H1 (cell line): ENCODE measurements at regions of chr5 and their contacts with region 1.

Region 1: DNA sequence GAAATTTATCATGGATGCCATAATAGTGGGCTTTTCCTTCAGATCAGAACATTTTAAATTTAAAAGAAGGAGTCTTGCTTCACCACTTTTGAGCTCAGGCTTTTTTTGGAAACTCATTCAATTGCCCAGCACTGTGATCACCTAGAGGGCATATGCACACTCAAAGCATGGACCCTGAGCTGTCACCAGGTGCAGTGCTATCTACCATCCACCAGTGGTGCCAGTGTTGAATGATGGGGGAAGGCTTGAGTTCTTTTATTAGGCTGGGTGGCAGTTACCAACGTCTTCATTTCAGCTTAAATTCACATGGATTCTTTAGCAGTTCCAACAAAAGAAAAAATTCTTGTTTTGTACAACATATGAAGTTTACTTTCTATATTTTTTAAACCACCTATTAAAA is 164.1 kb downstream of the CFAP90 start:
- DNase-seq: no peak
- H3K4me3 ChIP-seq: no peak overlapping the region
- H3K27ac ChIP-seq: no peak overlapping the region
- H3K4me1 ChIP-seq: no peaks in the 10 kb centered on the region; a peak in 1 of 7 replicates
- H3K27me3 ChIP-seq: no peaks in the 10 kb centered on the region
- CTCF ChIP-seq: peak; percentile 17 to 47 (median 37); a peak in 3 of 4 replicates
- EP300 ChIP-seq: no peak
- POLR2A ChIP-seq: no peak
- RAD21 ChIP-seq: peak in 1 of 2 experiments; percentile 15; a peak in 1 of 4 replicates

Region 2: DNA sequence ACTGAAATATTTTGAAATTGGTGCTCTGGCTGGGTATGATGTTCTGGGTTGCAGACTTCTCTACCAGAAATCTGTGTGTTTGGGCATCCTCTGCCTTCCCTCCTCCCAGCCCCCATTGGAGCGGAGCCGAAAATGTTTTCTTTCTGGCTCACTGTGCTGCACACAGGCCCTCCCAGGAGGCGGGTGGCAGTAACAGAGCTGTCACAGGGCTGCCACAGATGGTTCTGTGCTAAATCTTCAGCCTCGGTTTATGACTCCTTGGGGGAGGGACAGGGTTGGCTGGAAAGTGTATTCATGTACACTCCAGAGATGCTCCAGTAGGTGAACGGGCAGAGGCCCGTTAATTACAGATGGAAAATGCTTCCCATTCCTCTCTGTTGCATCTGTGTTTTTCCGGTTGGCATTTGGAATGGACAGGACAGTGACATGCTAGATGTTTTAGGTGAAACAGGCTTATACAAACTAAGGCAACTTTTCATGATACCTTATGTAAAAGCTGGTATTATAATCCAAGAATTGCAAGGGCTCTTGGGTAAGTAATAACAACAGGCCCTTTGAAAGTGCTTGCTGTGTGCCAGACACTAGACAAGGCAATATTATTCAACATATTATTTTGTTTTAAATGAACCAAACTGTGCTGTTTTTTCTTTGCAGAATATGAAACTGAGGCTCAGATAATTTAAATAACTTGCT is 110.6 kb before region 1 on chr5:
- CTCF ChIA-PET with region 1: no interaction called
- POLR2A ChIA-PET with region 1: no interaction called
- DNase-seq: no peak
- H3K4me3 ChIP-seq: no peak overlapping the region
- H3K27ac ChIP-seq: no peak overlapping the region
- H3K4me1 ChIP-seq: peaks cover 0 to 3% (median 0%) of the 10 kb centered on the region in 4 experiments; a peak in 1 of 7 replicates
- H3K27me3 ChIP-seq: no peaks in the 10 kb centered on the region
- CTCF ChIP-seq: no peak
- EP300 ChIP-seq: no peak
- POLR2A ChIP-seq: no peak
- RAD21 ChIP-seq: no peak

Region 3: DNA sequence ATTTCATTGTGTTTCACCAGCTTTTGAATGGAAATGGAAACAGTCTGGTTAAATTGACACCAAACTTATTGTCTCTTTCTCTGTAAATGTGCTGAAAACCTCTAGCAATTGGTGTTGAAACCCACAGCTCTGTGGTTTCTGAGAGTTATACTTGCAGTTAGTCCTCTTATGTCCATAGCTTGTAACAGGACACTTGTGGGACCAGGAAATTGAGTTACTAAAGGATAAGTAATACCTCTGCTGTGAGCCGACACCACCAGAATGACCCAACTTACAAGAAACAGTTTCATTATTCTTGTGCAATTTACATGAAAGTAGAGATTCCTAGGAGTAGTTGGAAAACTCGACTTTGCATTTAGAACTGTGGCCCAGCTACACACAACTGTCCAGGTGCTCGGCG is 27.4 kb before region 1 on chr5:
- CTCF ChIA-PET with region 1: interaction called, 84 read pairs
- POLR2A ChIA-PET with region 1: no interaction called
- DNase-seq: no peak
- H3K4me3 ChIP-seq: no peak overlapping the region
- H3K27ac ChIP-seq: no peak overlapping the region
- H3K4me1 ChIP-seq: peaks cover 0 to 12% (median 5%) of the 10 kb centered on the region in 4 experiments; a peak in 5 of 7 replicates
- H3K27me3 ChIP-seq: no peaks in the 10 kb centered on the region
- CTCF ChIP-seq: no peak
- EP300 ChIP-seq: no peak
- POLR2A ChIP-seq: no peak
- RAD21 ChIP-seq: no peak

Region 4: GRCh38 chr5:7671381-7671993 is 15.3 kb before region 1 on chr5:
- CTCF ChIA-PET with region 1: interaction called, 84 read pairs
- POLR2A ChIA-PET with region 1: interaction called, 3 read pairs
- DNase-seq: no peak
- H3K4me3 ChIP-seq: no peak overlapping the region
- H3K27ac ChIP-seq: no peak overlapping the region
- H3K4me1 ChIP-seq: no peaks in the 10 kb centered on the region
- H3K27me3 ChIP-seq: no peaks in the 10 kb centered on the region
- CTCF ChIP-seq: no peak
- EP300 ChIP-seq: no peak
- POLR2A ChIP-seq: no peak
- RAD21 ChIP-seq: no peak

Region 5: DNA sequence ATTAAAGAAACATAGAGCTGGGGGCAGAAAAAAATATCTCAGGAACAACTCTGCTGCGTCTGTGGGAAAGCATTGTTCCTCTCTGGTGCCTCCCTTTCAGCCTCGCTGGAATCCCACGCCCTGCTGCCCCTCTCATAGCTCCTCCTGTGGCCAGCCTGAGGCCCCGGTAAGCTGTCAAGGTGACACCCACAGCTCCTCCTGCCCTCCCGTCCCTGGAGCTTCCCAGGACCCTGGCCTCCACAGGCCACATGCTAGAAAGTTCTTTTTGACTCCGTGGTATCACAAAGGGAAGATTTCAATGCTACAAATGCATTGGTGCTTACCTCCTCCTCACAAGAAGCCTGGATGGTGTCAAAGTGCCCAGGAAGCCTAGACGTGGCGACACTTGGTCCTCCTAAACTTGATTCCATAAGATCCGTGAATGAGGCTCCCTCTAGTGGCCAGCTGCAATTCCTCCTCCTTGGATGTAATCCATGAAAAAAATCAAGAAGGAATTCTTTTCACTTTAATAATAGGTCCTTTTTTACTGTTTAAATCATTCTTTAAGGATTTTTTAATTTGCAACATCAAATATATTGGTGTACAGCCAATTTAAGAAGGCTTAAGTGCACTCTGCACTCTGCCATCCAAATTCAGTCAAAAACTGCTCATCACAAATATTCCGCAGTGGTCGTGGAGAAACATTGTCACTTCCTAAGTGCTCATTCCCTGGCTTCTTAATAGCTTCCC is 59.3 kb after region 1 on chr5:
- CTCF ChIA-PET with region 1: interaction called, 15 read pairs
- POLR2A ChIA-PET with region 1: no interaction called
- DNase-seq: peak; percentile 58 to 91
- H3K4me3 ChIP-seq: no peak overlapping the region
- H3K27ac ChIP-seq: no peak overlapping the region
- H3K4me1 ChIP-seq: peaks cover 0 to 2% (median under 1%) of the 10 kb centered on the region in 4 experiments; a peak in 1 of 7 replicates
- H3K27me3 ChIP-seq: no peaks in the 10 kb centered on the region
- CTCF ChIP-seq: peak; percentile 49 to 81 (median 66)
- EP300 ChIP-seq: no peak
- POLR2A ChIP-seq: no peak
- RAD21 ChIP-seq: peak; percentile 79

Region 6: GRCh38 chr5:7781899-7782298 is 95.1 kb after region 1 on chr5:
- CTCF ChIA-PET with region 1: no interaction called
- POLR2A ChIA-PET with region 1: no interaction called
- DNase-seq: no peak
- H3K4me3 ChIP-seq: no peak overlapping the region
- H3K27ac ChIP-seq: no peak overlapping the region
- H3K4me1 ChIP-seq: peaks cover 0 to 10% (median 6%) of the 10 kb centered on the region in 4 experiments; a peak in 5 of 7 replicates
- H3K27me3 ChIP-seq: no peaks in the 10 kb centered on the region
- CTCF ChIP-seq: no peak
- EP300 ChIP-seq: no peak
- POLR2A ChIP-seq: no peak
- RAD21 ChIP-seq: no peak